ENCODE measurements at regions of chr20 and their contacts with region 1.

Region 1: DNA sequence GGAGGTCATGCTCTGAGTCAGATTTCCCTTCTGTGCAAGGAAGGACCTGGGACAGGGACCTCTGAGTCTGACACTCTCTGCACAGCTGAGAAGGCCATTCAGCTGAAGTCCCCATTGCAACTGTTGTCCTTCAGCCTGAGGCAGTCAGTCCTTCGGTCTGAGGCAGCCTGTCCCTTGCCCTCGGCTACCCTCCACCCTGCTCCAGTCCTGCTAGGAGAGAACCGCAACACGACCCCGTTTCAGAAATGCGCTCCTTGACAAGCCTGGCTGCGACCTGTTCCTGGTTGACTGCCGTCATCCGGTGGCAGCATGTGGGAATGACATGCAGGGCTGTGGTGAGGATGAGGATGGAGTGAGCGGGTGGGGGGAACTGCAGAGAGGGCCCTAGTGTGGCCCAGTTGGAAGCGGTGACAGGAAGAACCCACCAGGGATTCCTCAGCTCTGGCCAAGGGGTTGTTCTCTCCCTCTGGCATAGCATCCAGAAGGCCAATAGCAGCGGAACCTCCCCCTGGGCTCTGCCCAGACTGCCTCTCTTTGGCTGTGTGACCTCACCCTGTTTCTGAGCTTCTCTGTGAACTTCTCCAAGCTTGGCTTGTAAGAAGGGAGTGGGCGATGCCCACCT is 40.3 kb upstream of the ANGPT4 start:
- DNase-seq: peak; percentile 72
- H3K4me3 Mint-ChIP-seq: no peak overlapping the region
- H3K27ac Mint-ChIP-seq: no peak overlapping the region
- H3K4me1 Mint-ChIP-seq: no peaks in the 10 kb centered on the region
- H3K27me3 Mint-ChIP-seq: peaks cover 67% of the 10 kb centered on the region
- CTCF ChIP-seq: peak; percentile 100

Region 2: DNA sequence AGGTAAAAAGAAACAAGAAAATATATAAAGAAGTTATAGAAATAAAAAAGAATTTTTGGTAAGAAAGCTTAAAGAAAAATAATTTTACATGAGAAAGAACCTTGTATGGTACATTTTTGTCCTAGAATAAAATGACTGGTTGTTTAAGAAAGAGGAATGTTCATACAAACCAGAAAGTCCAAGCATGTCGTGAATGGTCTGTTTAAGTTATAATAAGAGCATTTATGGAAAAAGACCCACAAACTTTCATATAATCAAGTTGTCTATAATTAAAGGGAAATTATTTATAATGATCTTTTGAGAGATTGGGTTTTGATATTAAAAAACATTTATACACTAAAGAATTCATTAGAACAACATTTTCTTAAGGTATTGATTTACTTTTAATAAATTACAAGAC is 150.7 kb before region 1 on chr20:
- CTCF ChIA-PET with region 1: interaction called, 42 read pairs
- POLR2A ChIA-PET with region 1: no interaction called
- intact Hi-C with region 1: no loop called
- DNase-seq: peak; percentile 25
- H3K4me3 Mint-ChIP-seq: no peak overlapping the region
- H3K27ac Mint-ChIP-seq: no peak overlapping the region
- H3K4me1 Mint-ChIP-seq: no peaks in the 10 kb centered on the region
- H3K27me3 Mint-ChIP-seq: peaks cover 15% of the 10 kb centered on the region
- CTCF ChIP-seq: no peak

Region 3: GRCh38 chr20:833450-834150 is 122.8 kb before region 1 on chr20 and contains the start of gene FAM110A:
- CTCF ChIA-PET with region 1: interaction called, 99 read pairs
- POLR2A ChIA-PET with region 1: interaction called, 3 read pairs
- intact Hi-C with region 1: no loop called
- DNase-seq: peak; percentile 95
- H3K4me3 Mint-ChIP-seq: peak within 1 kb of the TSS; percentile 88
- H3K27ac Mint-ChIP-seq: peak within 1 kb of the TSS; percentile 79
- H3K4me1 Mint-ChIP-seq: peaks cover 23% of the 10 kb centered on the region
- H3K27me3 Mint-ChIP-seq: no peaks in the 10 kb centered on the region
- CTCF ChIP-seq: no peak
- total RNA-seq, gene FAM110A: 9.2 and 13.6 TPM in 2 replicates

Region 4: DNA sequence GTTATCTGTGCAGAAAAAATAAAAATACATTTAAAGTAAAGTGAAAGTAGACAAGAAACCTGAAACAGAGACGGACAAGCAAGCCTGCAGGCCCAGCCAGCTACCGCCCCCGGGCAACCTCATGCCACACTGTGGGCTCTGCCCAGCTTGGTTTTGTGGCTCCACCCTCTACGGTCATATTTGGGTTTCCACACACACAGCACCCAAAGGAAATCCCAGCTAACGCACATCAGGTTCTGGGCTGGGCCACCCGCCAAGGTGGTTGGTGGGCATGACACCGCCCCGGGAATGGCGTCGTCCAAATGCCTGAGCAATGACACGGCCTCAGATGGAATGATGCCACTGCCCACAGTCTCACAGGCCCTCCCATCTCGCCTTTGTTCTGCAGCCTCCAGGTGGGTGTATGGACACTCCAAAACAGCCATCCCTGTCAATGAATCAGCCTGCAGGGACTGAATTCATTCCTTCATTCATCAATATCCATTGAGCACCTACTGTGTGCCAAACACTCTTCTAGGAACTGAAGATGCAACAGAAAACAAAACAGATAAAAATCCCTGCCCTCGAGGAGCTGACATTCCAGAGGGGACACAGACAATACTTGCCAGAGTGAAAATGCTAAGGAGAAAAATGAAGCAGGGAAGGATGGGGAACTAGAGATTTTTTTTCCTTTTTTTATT is 99.9 kb before region 1 on chr20:
- CTCF ChIA-PET with region 1: interaction called, 44 read pairs
- POLR2A ChIA-PET with region 1: no interaction called
- intact Hi-C with region 1: no loop called
- DNase-seq: peak; percentile 99
- H3K4me3 Mint-ChIP-seq: peak overlapping the region; percentile 61
- H3K27ac Mint-ChIP-seq: peak overlapping the region; percentile 84
- H3K4me1 Mint-ChIP-seq: peaks cover 59% of the 10 kb centered on the region
- H3K27me3 Mint-ChIP-seq: no peaks in the 10 kb centered on the region
- CTCF ChIP-seq: no peak

Region 5: DNA sequence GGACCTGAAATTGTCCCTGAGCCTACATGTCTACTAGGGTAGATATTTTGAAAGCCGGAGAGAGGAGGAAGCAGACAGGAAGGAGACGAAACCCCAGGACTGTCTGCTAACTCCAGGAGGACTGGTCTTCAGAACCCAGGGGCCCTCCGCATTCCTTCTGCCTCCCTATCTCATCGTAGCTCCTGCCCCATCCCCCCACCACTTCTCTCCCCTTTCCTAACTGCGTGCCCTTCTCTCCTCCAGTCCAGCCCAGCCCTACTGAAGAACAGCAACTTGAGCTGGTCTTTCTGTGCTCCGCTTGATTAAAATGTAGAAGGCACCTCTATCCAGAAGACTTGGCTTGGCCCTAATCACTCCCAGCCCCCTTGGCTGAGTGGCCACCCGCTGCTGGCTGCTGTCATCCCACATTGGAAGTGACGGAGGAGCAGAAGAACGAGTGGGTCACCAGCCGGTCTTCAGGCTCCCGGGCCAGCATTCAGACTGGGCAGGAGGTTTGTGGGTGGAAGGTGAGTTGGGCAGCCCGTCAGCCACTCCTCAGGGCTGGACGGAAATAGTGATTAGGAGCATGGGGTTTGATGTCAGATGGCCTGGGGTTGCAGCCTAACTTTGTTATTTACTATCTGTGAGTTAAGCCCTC is 11.5 kb before region 1 on chr20:
- CTCF ChIA-PET with region 1: interaction called, 24 read pairs
- POLR2A ChIA-PET with region 1: no interaction called
- intact Hi-C with region 1: no loop called
- DNase-seq: no peak
- H3K4me3 Mint-ChIP-seq: no peak overlapping the region
- H3K27ac Mint-ChIP-seq: no peak overlapping the region
- H3K4me1 Mint-ChIP-seq: no peaks in the 10 kb centered on the region
- H3K27me3 Mint-ChIP-seq: peaks cover 58% of the 10 kb centered on the region
- CTCF ChIP-seq: no peak

Region 6: GRCh38 chr20:986733-987355 is 30.4 kb after region 1 on chr20:
- CTCF ChIA-PET with region 1: interaction called, 23 read pairs
- POLR2A ChIA-PET with region 1: no interaction called
- intact Hi-C with region 1: no loop called
- DNase-seq: peak; percentile 37
- H3K4me3 Mint-ChIP-seq: no peak overlapping the region
- H3K27ac Mint-ChIP-seq: no peak overlapping the region
- H3K4me1 Mint-ChIP-seq: peaks cover 7% of the 10 kb centered on the region
- H3K27me3 Mint-ChIP-seq: peaks cover 62% of the 10 kb centered on the region
- CTCF ChIP-seq: no peak

Region 7: GRCh38 chr20:1212607-1213396 is 256.4 kb after region 1 on chr20:
- CTCF ChIA-PET with region 1: interaction called, 56 read pairs
- POLR2A ChIA-PET with region 1: no interaction called
- intact Hi-C with region 1: loop called (anchors 5 kb)
- DNase-seq: peak; percentile 74
- H3K4me3 Mint-ChIP-seq: no peak overlapping the region
- H3K27ac Mint-ChIP-seq: no peak overlapping the region
- H3K4me1 Mint-ChIP-seq: peaks cover 20% of the 10 kb centered on the region
- H3K27me3 Mint-ChIP-seq: peaks cover 58% of the 10 kb centered on the region
- CTCF ChIP-seq: peak; percentile 78

Measured in MCF 10A (cell line).